Common myeloid progenitor, CD34-positive (primary cell): ENCODE measurements at regions of chr17 and their contacts with region 1.

Region 1: DNA sequence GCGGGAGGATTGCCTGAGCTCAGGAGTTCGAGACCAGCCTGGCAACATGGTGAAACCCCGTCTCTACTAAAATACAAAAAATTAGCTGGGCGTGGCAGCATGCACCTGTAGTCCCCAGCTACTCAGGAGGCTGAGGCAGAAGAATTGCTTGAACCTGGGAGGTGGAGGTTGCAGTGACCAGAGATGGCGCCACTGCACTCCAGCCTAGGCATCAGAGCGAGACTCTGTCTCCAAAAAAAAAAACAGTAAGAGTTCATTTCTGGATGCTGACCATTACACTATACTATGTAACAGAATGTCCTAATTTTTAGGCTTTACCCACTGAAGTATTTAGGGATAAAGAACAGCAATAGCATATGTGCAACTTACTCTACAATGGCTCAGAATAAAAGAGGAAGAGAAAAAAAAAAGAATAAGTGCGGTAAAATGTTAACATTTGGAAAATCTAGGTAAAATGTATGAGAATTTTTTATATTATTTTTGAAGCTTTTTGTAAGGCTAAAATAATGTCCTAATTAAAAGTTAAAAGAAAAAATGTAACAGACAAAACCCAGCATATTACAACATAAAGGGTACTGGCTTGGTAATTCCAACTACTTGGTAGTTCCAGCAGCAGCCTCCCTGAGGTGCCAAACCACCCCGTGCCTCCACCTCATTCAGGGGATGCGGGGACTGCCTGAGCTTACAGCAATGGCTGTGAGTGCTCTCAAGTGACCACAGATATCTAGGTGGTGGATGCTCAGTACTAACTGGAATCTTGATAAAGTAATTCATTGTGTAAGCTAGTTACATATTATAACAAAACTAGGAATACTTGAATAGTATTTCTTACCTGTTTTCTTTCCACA is 10.9 kb downstream of the COPS3 start:
- DNase-seq: peak in 2 of 3 donors; percentile 19 to 25
- H3K4me3 ChIP-seq: no peak overlapping the region
- H3K27ac ChIP-seq: no peak overlapping the region
- H3K4me1 ChIP-seq: no peaks in the 10 kb centered on the region
- H3K27me3 ChIP-seq: no peaks in the 10 kb centered on the region

Region 2: DNA sequence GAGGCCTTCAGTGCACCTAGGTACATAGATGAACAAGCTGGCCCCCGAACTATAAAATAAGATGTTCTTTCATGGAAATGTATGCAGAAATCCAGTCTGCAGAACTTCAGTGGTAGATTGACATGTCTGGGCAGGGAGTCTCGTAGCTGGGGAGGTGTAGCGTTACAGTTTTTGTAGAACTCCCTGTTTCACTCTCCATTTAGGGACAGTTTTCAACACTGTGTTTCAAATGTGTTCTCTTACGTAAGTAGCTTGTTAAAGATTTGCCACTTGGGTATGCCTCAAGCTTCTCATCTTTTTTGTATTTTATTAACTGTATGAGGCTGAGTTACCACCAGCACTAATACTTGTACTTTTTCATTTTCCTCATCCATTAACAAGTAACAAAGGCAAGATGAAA is 110.6 kb before region 1 on chr17:
- CTCF ChIA-PET with region 1: no interaction called
- POLR2A ChIA-PET with region 1: no interaction called
- DNase-seq: no peak
- H3K4me3 ChIP-seq: no peak overlapping the region
- H3K27ac ChIP-seq: no peak overlapping the region
- H3K4me1 ChIP-seq: no peaks in the 10 kb centered on the region
- H3K27me3 ChIP-seq: no peaks in the 10 kb centered on the region

Region 3: DNA sequence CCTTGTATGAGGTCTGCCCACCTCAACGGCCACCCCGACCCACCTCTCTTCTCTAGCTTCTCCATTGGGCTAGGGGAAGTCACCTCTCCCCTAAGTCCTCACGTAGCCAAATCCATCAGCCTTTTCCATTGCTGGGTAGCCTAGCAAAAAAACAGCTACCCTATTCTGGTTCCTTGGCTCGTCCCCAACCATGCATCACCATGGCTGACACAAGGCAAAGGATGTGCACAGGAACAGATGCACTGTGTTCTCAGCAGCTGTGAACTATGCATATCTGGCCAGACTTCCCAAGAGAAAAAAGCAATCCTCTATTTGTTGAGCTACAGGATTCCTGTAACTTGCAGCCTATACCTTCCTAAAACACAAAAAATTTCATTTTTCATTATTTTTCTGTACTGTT is 11.2 kb before region 1 on chr17:
- CTCF ChIA-PET with region 1: interaction called, 16 read pairs
- POLR2A ChIA-PET with region 1: no interaction called
- DNase-seq: no peak
- H3K4me3 ChIP-seq: no peak overlapping the region
- H3K27ac ChIP-seq: no peak overlapping the region
- H3K4me1 ChIP-seq: no peaks in the 10 kb centered on the region
- H3K27me3 ChIP-seq: no peaks in the 10 kb centered on the region

Region 4: GRCh38 chr17:17313350-17313991 is 43.3 kb after region 1 on chr17:
- CTCF ChIA-PET with region 1: interaction called, 57 read pairs
- POLR2A ChIA-PET with region 1: no interaction called
- DNase-seq: peak; percentile 60 to 74 (median 72)
- H3K4me3 ChIP-seq: no peak overlapping the region
- H3K27ac ChIP-seq: no peak overlapping the region
- H3K4me1 ChIP-seq: no peaks in the 10 kb centered on the region
- H3K27me3 ChIP-seq: no peaks in the 10 kb centered on the region